Activated CD8-positive, alpha-beta T cell treated with anti-CD3 and anti-CD28 coated beads for 36 hours (primary cell): ENCODE measurements at regions of chr2 and their contacts with region 1.

Region 1: DNA sequence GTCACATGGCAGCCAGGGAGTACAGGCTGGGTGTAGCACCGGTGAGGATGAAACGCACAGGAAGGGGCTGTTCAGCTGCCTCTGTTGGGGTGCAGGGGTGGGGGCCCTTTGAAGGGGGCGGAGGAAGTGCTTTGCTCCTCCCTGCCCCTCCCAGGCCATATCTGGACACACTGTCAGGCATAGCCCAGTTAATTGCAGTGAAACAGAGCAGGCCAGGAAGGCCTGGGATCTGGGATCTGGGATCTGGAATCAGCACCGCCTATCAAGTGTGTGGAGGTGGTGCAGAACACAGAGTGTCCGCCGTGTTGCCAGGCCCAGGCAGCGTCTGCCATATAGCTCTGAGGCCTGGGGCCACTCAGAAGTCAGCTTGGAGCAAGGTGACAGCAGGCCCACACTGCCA is 119.3 kb upstream of the MSH2 start:
- DNase-seq: no peak
- ATAC-seq: no peak
- H3K4me3 Mint-ChIP-seq: no peak overlapping the region
- H3K27ac Mint-ChIP-seq: no peak overlapping the region
- H3K4me1 Mint-ChIP-seq: no peaks in the 10 kb centered on the region
- H3K27me3 Mint-ChIP-seq: peaks cover 4% of the 10 kb centered on the region
- CTCF ChIP-seq: no peak

Region 2: GRCh38 chr2:47272031-47272864 is 11.4 kb before region 1 on chr2:
- CTCF ChIA-PET with region 1: interaction called, 14 read pairs
- POLR2A ChIA-PET with region 1: no interaction called
- intact Hi-C with region 1: no loop called
- DNase-seq: peak; percentile 60
- ATAC-seq: peak; percentile 96
- H3K4me3 Mint-ChIP-seq: peak overlapping the region; percentile 46
- H3K27ac Mint-ChIP-seq: no peak overlapping the region
- H3K4me1 Mint-ChIP-seq: no peaks in the 10 kb centered on the region
- H3K27me3 Mint-ChIP-seq: no peaks in the 10 kb centered on the region
- CTCF ChIP-seq: peak; percentile 99